ENCODE measurements at regions of chr9 and their contacts with region 1.

Region 1: GRCh38 chr9:114681594-114682332 is at the start of gene TEX48:
- DNase-seq: peak; percentile 43 to 84
- H3K4me3 ChIP-seq: no peak within 1 kb of the TSS
- H3K27ac ChIP-seq: no peak within 1 kb of the TSS
- H3K4me1 ChIP-seq: no peaks in the 10 kb centered on the region
- H3K27me3 ChIP-seq: no peaks in the 10 kb centered on the region; a peak in 2 of 7 replicates
- CTCF ChIP-seq: peak; percentile 86 to 91 (median 90)
- EP300 ChIP-seq: no peak
- POLR2A ChIP-seq: no peak
- RAD21 ChIP-seq: peak; percentile 85 to 94
- total RNA-seq, gene TEX48: not detected in 2 replicates

Region 2: DNA sequence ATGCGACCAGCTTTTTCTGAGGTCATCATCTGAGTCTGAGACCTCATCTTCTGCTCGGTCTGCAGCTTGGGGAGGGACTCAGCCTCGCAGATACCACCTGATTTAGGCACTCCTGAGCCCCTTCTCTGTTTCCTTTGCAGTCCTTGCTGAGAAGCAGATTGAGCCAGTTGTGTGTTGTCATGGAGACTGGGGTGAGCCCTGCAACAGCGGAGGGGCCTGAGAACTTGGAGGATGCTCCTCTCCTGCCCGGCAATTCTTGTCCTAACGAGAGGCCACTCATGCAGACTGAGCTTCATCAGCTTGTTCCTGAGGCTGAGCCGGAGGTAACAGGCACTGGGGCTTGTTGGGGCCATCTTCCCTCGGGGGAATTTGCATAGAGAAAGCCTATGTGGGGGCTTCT is 43.4 kb before region 1 on chr9:
- CTCF ChIA-PET with region 1: no interaction called
- POLR2A ChIA-PET with region 1: no interaction called
- DNase-seq: no peak
- H3K4me3 ChIP-seq: no peak overlapping the region
- H3K27ac ChIP-seq: no peak overlapping the region
- H3K4me1 ChIP-seq: no peaks in the 10 kb centered on the region
- H3K27me3 ChIP-seq: no peaks in the 10 kb centered on the region
- CTCF ChIP-seq: no peak
- EP300 ChIP-seq: no peak
- POLR2A ChIP-seq: no peak
- RAD21 ChIP-seq: no peak

Region 3: DNA sequence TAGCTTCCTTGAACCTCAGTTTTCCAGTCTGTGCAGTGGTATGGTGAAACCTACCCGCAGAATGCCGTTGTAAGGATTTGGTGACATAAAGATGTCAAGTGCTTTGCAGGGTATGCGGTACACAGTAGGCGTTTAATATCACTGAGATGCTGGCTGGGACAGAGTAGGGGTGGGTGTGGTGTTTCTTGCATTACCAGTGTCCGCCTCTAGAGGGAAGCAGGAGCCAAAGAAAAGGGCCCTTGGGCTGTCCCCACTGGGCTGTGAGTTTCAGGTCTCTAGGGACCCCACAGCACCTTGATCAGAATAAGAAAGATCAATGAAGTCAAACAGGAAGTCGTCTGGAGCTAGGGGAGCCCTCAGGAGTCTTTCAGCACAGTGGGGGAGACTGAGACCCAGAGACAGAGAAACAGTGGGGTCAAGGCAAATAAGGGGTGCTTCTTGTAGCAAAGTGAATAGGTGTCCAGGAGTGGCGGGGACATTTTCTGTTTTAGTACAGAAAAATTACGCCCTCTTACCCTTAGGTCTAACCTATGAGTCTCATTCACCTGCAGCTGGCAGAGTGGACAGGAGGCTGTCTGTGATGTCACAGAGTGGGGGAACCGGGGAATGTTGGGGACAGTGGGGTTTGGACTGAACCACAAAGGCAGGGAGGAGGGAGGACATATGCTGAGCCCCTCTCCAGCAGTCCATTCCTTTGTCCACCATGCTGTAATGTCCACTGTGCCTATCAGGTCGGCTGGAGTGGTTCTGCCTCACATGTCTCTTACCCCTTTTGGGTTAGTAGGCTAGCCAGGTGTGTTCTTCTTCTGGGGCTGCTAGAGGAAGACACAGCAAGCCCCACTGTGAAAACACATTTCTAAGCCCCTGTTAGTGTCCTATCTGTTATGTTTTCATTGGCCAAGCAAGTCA is 19.4 kb before region 1 on chr9:
- CTCF ChIA-PET with region 1: interaction called, 35 read pairs
- POLR2A ChIA-PET with region 1: no interaction called
- DNase-seq: peak in 1 of 2 experiments; percentile 89
- H3K4me3 ChIP-seq: no peak overlapping the region
- H3K27ac ChIP-seq: no peak overlapping the region
- H3K4me1 ChIP-seq: peaks cover 0 to 11% (median 6%) of the 10 kb centered on the region in 4 experiments; a peak in 4 of 7 replicates
- H3K27me3 ChIP-seq: no peaks in the 10 kb centered on the region
- CTCF ChIP-seq: peak; percentile 70 to 90 (median 90)
- EP300 ChIP-seq: no peak
- POLR2A ChIP-seq: no peak
- RAD21 ChIP-seq: peak; percentile 81 to 87

Region 4: DNA sequence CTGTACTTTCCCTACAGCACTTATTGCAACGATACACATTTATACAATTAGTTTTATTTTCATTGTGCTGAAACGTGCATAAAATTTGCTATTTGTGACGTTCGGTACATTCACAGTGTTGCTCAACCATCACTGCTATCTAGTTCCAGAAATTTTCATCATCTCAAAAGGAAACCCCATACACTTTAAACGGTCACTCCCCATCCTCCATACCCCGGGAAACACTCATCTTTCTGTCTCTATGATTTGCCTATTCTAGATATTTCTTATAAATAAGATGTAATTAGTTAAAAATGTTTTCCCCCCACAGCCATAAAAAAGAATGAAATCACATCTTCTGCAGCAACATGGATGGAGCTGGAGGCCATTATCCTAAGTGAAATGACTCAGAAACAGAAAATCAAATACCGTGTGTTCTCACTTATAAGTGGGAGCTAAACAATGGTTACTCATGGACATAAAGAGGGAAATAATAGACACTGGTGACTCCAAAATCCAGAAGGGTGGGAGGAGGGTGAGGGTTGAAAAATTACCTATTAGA is 40.4 kb after region 1 on chr9:
- CTCF ChIA-PET with region 1: interaction called, 10 read pairs
- POLR2A ChIA-PET with region 1: no interaction called
- DNase-seq: no peak
- H3K4me3 ChIP-seq: no peak overlapping the region
- H3K27ac ChIP-seq: no peak overlapping the region
- H3K4me1 ChIP-seq: no peaks in the 10 kb centered on the region
- H3K27me3 ChIP-seq: no peaks in the 10 kb centered on the region; a peak in 1 of 7 replicates
- CTCF ChIP-seq: no peak
- EP300 ChIP-seq: no peak
- POLR2A ChIP-seq: no peak
- RAD21 ChIP-seq: no peak

Region 5: GRCh38 chr9:114779352-114779845 is 97.6 kb after region 1 on chr9:
- CTCF ChIA-PET with region 1: no interaction called
- POLR2A ChIA-PET with region 1: no interaction called
- DNase-seq: no peak
- H3K4me3 ChIP-seq: no peak overlapping the region
- H3K27ac ChIP-seq: no peak overlapping the region
- H3K4me1 ChIP-seq: no peaks in the 10 kb centered on the region
- H3K27me3 ChIP-seq: no peaks in the 10 kb centered on the region
- CTCF ChIP-seq: no peak
- EP300 ChIP-seq: no peak
- POLR2A ChIP-seq: no peak
- RAD21 ChIP-seq: no peak

Region 6: DNA sequence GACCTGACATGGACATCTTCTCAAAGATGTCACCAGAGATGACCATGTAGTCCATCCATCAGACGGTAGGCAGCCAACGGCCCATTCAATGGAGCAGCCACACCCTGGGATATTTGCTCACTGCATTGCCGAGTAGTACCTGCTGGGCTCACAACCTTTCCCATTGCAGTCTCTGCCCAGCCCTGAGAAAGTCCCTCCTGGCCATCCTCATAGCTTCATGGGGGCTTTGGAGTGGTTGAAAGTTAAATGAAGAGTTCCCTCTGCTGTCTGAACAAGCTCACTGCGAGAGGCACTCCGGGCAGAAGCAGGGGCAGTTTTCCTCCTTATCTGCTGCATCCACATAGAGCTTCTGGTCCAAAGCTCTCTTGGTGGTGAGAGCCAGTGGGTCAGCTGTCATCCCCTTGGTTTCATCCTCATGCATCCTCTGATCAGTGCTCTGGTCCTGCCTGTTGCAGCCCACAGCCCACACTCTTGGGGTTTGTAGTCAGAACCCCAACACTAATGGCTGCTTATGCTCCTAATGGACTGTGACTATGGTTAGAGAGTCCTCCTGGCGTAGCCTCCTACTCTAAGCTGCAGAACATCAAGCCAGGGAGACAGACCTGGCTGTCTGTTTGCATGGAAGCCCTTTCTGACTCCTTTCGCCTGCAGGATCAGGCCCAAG is 225.3 kb after region 1 on chr9:
- CTCF ChIA-PET with region 1: interaction called, 171 read pairs
- POLR2A ChIA-PET with region 1: no interaction called
- DNase-seq: peak; percentile 54 to 63
- H3K4me3 ChIP-seq: no peak overlapping the region
- H3K27ac ChIP-seq: no peak overlapping the region
- H3K4me1 ChIP-seq: no peaks in the 10 kb centered on the region
- H3K27me3 ChIP-seq: peaks cover 0 to 2% (median 0%) of the 10 kb centered on the region in 4 experiments; a peak in 1 of 7 replicates
- CTCF ChIP-seq: peak; percentile 58 to 96 (median 92)
- EP300 ChIP-seq: peak in 1 of 2 experiments; percentile 13; a peak in 1 of 3 replicates
- POLR2A ChIP-seq: no peak
- RAD21 ChIP-seq: peak; percentile 97 to 99

Region 7: DNA sequence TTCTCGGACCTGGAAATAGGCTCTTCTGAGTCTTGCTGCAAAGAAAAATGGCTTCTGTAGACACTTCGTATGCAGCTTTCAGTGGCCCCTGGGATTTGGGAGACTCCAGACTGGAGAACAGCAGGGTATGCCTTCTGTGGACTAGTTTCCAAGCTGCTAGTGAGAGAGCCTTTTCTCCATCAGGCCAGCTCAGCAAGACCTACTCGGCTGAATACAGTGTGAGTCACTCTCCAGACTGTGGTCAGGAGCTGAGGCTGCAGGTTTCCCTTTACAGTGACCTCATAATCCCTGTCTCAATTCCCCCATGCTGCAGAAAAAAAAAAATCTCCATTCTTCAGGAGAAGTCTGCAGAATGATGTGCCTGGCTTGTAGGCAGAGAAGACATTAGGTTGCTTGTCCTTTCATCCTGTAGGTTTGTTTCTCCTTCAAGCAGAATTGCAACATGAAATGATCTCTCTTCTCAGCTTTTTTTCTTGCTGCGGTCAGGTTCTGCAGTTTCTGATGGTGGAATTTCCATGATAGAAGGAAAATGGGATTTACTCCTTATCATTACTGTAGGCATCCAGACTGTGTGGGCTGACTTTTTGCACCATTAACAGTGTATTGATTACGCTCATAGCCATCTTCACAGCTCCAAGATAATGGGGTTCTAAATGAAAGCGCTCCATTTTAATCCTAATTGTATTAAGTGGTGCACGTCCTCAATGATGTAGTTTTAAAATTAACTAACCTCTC is 326.9 kb after region 1 on chr9:
- CTCF ChIA-PET with region 1: interaction called, 31 read pairs
- POLR2A ChIA-PET with region 1: no interaction called
- DNase-seq: no peak
- H3K4me3 ChIP-seq: no peak overlapping the region
- H3K27ac ChIP-seq: no peak overlapping the region
- H3K4me1 ChIP-seq: no peaks in the 10 kb centered on the region
- H3K27me3 ChIP-seq: peaks cover 0 to 2% (median 0%) of the 10 kb centered on the region in 4 experiments; a peak in 1 of 7 replicates
- CTCF ChIP-seq: no peak
- EP300 ChIP-seq: no peak
- POLR2A ChIP-seq: no peak
- RAD21 ChIP-seq: no peak